ENCODE measurements at regions of chr4 and their contacts with region 1.

Region 1: GRCh38 chr4:87848622-87849351 is 16.0 kb downstream of the MEPE start:
- DNase-seq: peak; percentile 40
- H3K4me3 Mint-ChIP-seq: no peak overlapping the region
- H3K27ac Mint-ChIP-seq: no peak overlapping the region
- H3K4me1 Mint-ChIP-seq: peaks cover 25% of the 10 kb centered on the region
- H3K27me3 Mint-ChIP-seq: no peaks in the 10 kb centered on the region
- CTCF ChIP-seq: peak; percentile 42

Region 2: DNA sequence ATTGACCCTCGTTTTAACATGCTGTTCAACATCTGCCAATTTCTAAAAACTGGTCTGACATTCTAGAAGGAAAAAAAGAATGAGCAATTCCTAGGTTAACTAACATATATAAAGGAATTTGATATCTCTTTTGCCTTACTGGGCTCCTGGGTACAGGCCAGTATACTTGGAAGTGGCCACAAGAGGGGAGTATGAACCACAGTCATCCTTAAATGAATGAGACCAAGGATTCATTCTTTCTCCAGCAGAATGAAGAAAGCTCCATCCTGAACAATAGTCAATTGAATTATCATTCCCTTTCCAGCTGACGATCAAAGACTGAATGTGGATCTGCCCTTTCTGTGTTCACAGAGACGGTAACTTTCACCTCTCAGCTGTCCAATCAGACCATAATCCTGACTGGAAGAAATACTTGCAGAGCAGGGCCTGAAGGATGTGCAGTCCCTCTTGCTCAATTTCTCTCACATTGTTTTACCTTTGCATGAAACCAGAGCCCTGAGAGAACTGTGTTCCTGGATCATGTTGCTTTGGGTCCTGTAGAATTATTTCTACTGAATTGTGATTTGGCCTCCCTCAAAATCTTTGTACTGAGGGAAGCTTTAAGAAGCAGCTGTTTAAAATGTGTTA is 304.8 kb before region 1 on chr4:
- CTCF ChIA-PET with region 1: interaction called, 7 read pairs
- intact Hi-C with region 1: loop called (anchors 1 kb)
- DNase-seq: peak; percentile 32
- H3K4me3 Mint-ChIP-seq: no peak overlapping the region
- H3K27ac Mint-ChIP-seq: no peak overlapping the region
- H3K4me1 Mint-ChIP-seq: no peaks in the 10 kb centered on the region
- H3K27me3 Mint-ChIP-seq: peaks cover 21% of the 10 kb centered on the region
- CTCF ChIP-seq: no peak

Region 3: GRCh38 chr4:87895964-87896621 is 47.3 kb after region 1 on chr4:
- CTCF ChIA-PET with region 1: interaction called, 10 read pairs
- intact Hi-C with region 1: no loop called
- DNase-seq: peak; percentile 55
- H3K4me3 Mint-ChIP-seq: peak overlapping the region; percentile 1
- H3K27ac Mint-ChIP-seq: peak overlapping the region; percentile 75
- H3K4me1 Mint-ChIP-seq: peaks cover 23% of the 10 kb centered on the region
- H3K27me3 Mint-ChIP-seq: no peaks in the 10 kb centered on the region
- CTCF ChIP-seq: no peak

Region 4: GRCh38 chr4:87938746-87939145 is 90.0 kb after region 1 on chr4:
- CTCF ChIA-PET with region 1: no interaction called
- intact Hi-C with region 1: loop called (anchors 1 kb)
- DNase-seq: no peak
- H3K4me3 Mint-ChIP-seq: no peak overlapping the region
- H3K27ac Mint-ChIP-seq: no peak overlapping the region
- H3K4me1 Mint-ChIP-seq: peaks cover 23% of the 10 kb centered on the region
- H3K27me3 Mint-ChIP-seq: no peaks in the 10 kb centered on the region
- CTCF ChIP-seq: no peak

Region 5: DNA sequence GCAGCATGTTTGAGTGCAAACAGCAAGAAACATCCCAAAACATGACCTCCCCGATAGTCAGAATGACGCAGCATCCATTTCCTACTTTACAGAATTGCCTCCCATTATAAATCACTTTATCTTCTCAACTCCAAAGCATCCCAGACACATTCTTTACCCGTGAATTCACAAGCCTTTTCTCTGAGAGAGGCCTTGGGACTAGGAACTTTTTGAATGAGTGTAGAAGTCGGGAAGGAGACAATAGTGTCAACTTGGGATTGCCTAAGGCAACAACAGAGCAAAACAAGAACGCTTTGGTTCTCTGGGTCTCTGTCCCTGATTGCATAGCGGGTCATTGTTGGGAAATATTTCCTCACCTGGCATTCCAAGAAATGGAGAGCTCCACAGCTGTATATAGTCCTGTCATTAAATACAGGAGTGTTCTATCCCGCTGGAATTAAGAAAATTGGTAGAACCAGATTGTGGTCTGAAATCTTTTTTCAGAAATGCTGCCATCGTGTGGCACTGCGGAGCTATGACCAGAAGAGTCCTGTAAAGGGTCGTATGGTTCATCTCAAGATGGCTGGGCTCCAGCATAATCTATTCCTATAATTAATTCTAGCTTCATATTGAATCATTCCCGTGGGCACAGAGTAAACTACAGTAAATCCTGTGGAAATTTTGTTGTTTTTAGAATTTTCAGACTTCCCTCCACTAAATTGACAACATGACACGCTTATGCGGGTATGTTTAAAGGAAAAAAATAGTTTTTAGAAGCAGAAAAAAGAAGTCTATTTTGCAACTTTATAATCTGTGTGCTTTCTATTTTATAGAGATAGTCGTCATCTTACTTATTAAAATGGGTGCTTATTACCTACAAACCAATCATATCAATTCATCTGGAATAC is 124.7 kb after region 1 on chr4:
- CTCF ChIA-PET with region 1: interaction called, 26 read pairs
- intact Hi-C with region 1: loop called (anchors 1 kb)
- DNase-seq: peak; percentile 43
- H3K4me3 Mint-ChIP-seq: no peak overlapping the region
- H3K27ac Mint-ChIP-seq: no peak overlapping the region
- H3K4me1 Mint-ChIP-seq: peaks cover 19% of the 10 kb centered on the region
- H3K27me3 Mint-ChIP-seq: no peaks in the 10 kb centered on the region
- CTCF ChIP-seq: no peak

Region 6: DNA sequence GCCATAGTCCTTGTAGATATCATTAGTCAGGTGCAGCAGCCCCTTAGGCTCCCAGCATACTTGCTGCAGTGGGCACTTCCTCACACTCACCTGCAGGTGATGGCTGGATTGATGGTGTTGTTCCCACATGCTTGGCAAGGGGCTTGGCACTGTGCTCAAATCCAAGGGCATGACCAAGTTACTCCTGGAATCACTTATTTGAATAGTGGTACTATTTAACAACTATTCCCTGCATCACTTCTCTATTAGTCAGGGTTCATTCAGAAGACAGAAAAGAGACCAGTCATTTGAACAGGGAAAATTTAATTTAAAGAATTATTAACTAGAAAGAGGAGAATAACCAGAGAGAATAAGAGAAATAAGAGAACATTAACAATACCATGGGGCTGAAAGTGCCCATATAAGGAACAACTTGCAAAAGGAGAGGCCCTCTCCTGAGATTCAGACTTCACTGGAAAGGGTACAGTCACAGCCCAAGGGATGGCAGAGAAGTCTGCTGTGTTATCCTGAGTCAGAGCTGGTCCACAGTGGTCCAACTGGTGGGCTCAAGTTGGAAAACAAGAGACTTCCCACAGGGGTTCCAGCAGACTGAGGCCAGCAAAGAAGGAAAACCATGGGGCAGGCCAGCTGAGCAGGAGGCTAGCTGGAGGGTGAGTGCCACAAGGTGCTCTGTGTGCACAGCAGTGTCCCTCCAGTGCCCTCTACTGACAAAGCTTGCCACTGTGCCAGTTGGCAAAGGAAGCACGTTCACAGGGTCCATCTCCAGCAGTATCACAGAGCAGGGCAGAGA is 136.5 kb after region 1 on chr4:
- CTCF ChIA-PET with region 1: interaction called, 21 read pairs
- intact Hi-C with region 1: loop called (anchors 1 kb)
- DNase-seq: peak; percentile 79
- H3K4me3 Mint-ChIP-seq: no peak overlapping the region
- H3K27ac Mint-ChIP-seq: peak overlapping the region; percentile 68
- H3K4me1 Mint-ChIP-seq: peaks cover 23% of the 10 kb centered on the region
- H3K27me3 Mint-ChIP-seq: no peaks in the 10 kb centered on the region
- CTCF ChIP-seq: peak; percentile 54

Region 7: DNA sequence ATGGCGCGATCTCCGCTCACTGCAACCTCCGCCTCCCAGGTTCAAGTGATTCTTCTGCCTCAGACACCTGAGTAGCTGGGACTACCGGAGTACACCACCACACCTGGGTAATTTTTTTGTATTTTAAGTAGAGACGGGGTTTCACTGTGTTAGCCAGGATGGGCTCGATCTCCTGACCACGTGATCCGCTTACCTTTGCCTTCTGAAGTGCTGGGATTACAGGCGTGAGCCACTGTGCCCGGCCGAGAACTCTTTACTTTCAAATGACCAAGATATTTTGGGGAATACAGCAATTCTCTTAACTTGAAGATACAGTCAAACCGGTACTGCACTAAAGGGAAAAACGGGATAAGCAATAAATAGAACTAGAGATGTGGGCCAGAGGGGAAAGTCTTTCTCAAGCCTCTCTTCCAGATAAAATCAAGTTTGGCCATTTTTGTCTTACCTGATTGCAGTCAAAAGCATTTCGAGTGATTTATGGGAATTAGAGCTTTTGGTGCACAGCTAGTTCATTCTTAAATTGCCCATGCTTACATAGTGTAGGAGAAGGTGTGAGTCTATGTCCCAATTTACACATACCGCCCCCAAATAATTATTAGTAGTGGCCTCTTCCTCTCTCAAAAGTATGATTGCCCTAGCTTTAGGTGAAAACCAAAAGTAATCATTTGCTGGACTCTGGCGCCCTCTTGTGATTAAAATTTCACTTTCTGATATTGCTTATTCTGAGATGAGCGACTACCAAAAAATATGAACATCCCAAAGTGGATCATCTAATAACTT is 362.9 kb after region 1 on chr4:
- CTCF ChIA-PET with region 1: no interaction called
- intact Hi-C with region 1: loop called (anchors 5 kb)
- DNase-seq: peak; percentile 47
- H3K4me3 Mint-ChIP-seq: no peak overlapping the region
- H3K27ac Mint-ChIP-seq: no peak overlapping the region
- H3K4me1 Mint-ChIP-seq: peaks cover 10% of the 10 kb centered on the region
- H3K27me3 Mint-ChIP-seq: peaks cover 27% of the 10 kb centered on the region
- CTCF ChIP-seq: no peak